Caco-2 (cell line): ENCODE measurements at regions of chr2 and their contacts with region 1.

Region 1: GRCh38 chr2:88574445-88574844 is 52.8 kb downstream of the EIF2AK3 start:
- DNase-seq: no peak
- H3K4me3 ChIP-seq: no peak overlapping the region
- H3K4me3 Mint-ChIP-seq: no peak overlapping the region
- H3K27ac Mint-ChIP-seq: no peak overlapping the region
- H3K4me1 ChIP-seq: no peaks in the 10 kb centered on the region; the same call in 1 of the 2 replicates
- H3K4me1 Mint-ChIP-seq: no peaks in the 10 kb centered on the region
- H3K27me3 ChIP-seq: no peaks in the 10 kb centered on the region
- H3K27me3 Mint-ChIP-seq: no peaks in the 10 kb centered on the region
- CTCF ChIP-seq: no peak

Region 2: DNA sequence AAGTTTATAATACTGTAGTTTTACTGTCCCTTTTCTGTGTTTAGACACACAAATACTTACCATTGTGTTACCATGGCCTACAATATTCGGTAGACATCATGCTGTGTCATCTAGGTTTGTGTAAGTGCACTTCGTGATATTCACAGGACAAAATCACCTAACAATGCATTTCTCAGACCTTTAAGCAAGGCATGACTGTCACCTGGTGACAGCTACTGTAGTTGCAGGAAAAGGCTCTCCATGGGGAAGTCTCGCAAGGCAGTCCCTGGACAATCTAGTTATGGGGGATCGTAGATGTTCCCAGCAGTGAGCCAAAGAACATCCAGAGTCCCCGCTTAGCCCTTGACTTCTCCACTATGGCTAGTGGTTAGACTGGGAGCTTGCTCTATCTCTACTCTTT is 20.3 kb before region 1 on chr2:
- CTCF ChIA-PET with region 1: no interaction called
- POLR2A ChIA-PET with region 1: no interaction called
- intact Hi-C with region 1: loop called (anchors 2 kb)
- DNase-seq: peak in 1 of 2 experiments; percentile 20
- H3K4me3 ChIP-seq: no peak overlapping the region
- H3K4me3 Mint-ChIP-seq: no peak overlapping the region
- H3K27ac Mint-ChIP-seq: no peak overlapping the region
- H3K4me1 ChIP-seq: no peaks in the 10 kb centered on the region
- H3K4me1 Mint-ChIP-seq: no peaks in the 10 kb centered on the region
- H3K27me3 ChIP-seq: no peaks in the 10 kb centered on the region
- H3K27me3 Mint-ChIP-seq: no peaks in the 10 kb centered on the region
- CTCF ChIP-seq: peak; percentile 29 to 59

Region 3: DNA sequence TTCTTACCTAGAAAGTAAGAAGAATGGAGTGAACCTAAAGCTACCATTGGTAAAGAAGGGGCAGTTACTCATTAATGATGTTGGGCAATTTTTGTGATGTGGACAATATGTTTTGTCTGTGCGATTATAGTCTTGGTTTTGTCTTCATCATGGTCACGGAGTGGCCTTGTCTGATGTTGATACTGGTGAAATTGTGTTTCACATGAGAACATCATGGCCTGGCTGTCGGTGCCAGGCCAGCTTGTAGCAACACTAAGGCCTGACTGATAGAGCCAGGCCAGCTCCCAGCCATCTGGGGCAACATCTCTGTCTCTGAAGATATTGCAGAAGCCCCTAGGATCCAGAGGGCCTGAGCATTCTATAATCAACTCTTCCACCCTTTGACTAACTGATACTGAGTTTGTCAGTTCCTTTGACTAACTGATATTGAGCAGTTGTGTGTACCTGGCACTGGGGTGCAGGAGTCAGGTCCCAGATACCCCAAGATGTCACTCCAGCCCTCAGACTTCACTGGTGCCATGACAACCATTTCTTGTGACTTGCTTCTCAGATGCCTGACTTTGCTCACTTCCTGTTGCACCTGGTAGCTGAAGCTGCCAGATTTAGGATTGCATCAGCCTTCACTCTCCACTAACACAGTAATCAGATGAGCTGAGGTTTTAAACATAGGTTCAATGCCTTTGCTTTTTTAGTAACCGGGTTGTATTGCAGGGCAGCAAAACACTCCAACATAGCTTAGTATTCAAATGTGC is 179.6 kb after region 1 on chr2:
- CTCF ChIA-PET with region 1: no interaction called
- POLR2A ChIA-PET with region 1: no interaction called
- intact Hi-C with region 1: no loop called
- DNase-seq: no peak
- H3K4me3 ChIP-seq: no peak overlapping the region
- H3K4me3 Mint-ChIP-seq: no peak overlapping the region
- H3K27ac Mint-ChIP-seq: peak overlapping the region; percentile 49
- H3K4me1 ChIP-seq: no peaks in the 10 kb centered on the region
- H3K4me1 Mint-ChIP-seq: no peaks in the 10 kb centered on the region
- H3K27me3 ChIP-seq: no peaks in the 10 kb centered on the region
- H3K27me3 Mint-ChIP-seq: no peaks in the 10 kb centered on the region
- CTCF ChIP-seq: no peak